ENCODE measurements at regions of chr11 and their contacts with region 1.

Region 1: GRCh38 chr11:60913793-60914632 is at the start of gene TMEM109:
- DNase-seq: peak; percentile 96
- H3K4me3 Mint-ChIP-seq: peak within 1 kb of the TSS; percentile 93
- H3K27ac Mint-ChIP-seq: peak within 1 kb of the TSS; percentile 98
- H3K4me1 Mint-ChIP-seq: peaks cover 42% of the 10 kb centered on the region
- H3K27me3 Mint-ChIP-seq: peaks cover 5% of the 10 kb centered on the region
- total RNA-seq, gene TMEM109: 144 and 147 TPM in 2 replicates

Region 2: GRCh38 chr11:60899046-60899936 is 14.7 kb before region 1 on chr11:
- intact Hi-C with region 1: no loop called
- DNase-seq: peak; percentile 81
- H3K4me3 Mint-ChIP-seq: no peak overlapping the region
- H3K27ac Mint-ChIP-seq: peak overlapping the region; percentile 50
- H3K4me1 Mint-ChIP-seq: peaks cover 12% of the 10 kb centered on the region
- H3K27me3 Mint-ChIP-seq: no peaks in the 10 kb centered on the region

Region 3: GRCh38 chr11:60951899-60952741 is 38.1 kb after region 1 on chr11 and contains the start of gene SLC15A3:
- intact Hi-C with region 1: loop called (anchors 1 kb)
- DNase-seq: peak; percentile 77
- H3K4me3 Mint-ChIP-seq: peak within 1 kb of the TSS; percentile 82
- H3K27ac Mint-ChIP-seq: peak within 1 kb of the TSS; percentile 74
- H3K4me1 Mint-ChIP-seq: peaks cover 16% of the 10 kb centered on the region
- H3K27me3 Mint-ChIP-seq: peaks cover 33% of the 10 kb centered on the region
- total RNA-seq, gene SLC15A3: 3.0 and 4.0 TPM in 2 replicates

Region 4: DNA sequence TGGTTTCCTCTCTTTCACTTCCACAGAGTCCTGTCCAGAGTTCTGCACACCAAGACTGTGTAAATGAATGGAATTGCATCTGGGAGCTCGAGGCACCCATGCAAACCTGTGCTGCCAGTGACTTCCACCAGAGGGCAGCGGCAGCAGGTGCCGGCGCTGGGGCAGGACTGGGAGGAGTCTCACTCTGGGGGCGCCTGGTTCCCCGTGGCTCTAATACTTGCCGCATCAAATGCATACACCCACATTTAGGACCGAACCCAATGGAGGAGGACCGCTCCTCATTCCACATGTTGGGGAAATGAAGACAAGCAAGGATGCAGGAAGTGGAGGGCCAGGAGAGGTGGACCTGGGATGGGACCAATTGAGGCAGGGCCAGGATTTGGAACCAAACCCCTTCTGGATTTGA is 56.4 kb after region 1 on chr11:
- intact Hi-C with region 1: loop called (anchors 1 kb)
- DNase-seq: peak; percentile 95
- H3K4me3 Mint-ChIP-seq: peak overlapping the region; percentile 93
- H3K27ac Mint-ChIP-seq: peak overlapping the region; percentile 64
- H3K4me1 Mint-ChIP-seq: peaks cover 25% of the 10 kb centered on the region
- H3K27me3 Mint-ChIP-seq: peaks cover 11% of the 10 kb centered on the region

Region 5: GRCh38 chr11:60978546-60979380 is 64.8 kb after region 1 on chr11:
- intact Hi-C with region 1: loop called (anchors 2 kb)
- DNase-seq: peak; percentile 84
- H3K4me3 Mint-ChIP-seq: peak overlapping the region; percentile 90
- H3K27ac Mint-ChIP-seq: peak overlapping the region; percentile 95
- H3K4me1 Mint-ChIP-seq: peaks cover 72% of the 10 kb centered on the region
- H3K27me3 Mint-ChIP-seq: no peaks in the 10 kb centered on the region

Region 6: DNA sequence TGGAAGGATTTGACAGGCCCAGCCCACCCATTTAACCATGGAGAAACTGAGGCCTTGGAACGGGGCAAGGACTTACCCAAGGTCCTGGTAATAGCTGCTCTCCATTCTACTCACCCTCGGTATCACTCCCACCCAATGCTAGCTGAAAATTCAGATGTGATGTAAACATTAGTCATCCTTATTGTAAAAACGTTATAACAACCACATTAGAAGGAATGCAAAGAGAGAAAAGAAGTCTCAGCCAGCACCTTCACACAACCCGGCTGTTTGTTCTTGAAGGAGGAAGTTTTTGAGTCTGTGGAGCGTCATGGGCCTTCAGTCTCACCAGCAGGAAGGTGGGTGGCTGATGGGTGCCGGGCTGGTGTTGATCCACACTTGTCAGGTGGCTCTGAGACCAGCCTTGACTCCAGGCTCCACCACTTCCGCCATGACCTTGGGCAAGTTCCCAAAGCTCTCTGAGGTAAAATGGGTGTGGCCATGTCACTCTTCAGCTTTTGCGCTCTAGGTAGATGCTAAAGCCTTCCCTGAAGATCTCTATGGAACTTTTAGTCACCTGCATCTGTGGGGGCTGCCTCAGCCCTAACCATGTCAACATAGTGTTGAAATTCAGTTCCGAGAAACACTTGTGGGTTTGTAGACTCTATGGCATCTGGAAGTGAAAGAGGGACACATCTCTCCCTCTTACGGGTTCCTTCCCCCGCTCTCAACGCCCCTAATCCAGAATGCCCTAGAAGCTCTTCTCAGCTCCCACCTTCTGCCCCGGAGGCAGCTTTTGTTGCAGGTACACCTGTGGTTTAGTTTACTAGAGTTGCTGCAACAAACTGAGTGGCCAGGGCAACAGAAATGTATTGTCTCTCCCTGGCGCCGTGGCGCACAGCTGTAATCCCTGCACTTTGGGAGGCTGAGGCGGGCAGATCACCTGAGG is 72.2 kb after region 1 on chr11:
- intact Hi-C with region 1: loop called (anchors 2 kb)
- DNase-seq: peak; percentile 95
- H3K4me3 Mint-ChIP-seq: peak overlapping the region; percentile 84
- H3K27ac Mint-ChIP-seq: peak overlapping the region; percentile 94
- H3K4me1 Mint-ChIP-seq: peaks cover 88% of the 10 kb centered on the region
- H3K27me3 Mint-ChIP-seq: no peaks in the 10 kb centered on the region

Region 7: GRCh38 chr11:61028272-61028761 is 114.3 kb after region 1 on chr11:
- intact Hi-C with region 1: loop called (anchors 10 kb)
- DNase-seq: peak; percentile 83
- H3K4me3 Mint-ChIP-seq: peak overlapping the region; percentile 88
- H3K27ac Mint-ChIP-seq: peak overlapping the region; percentile 97
- H3K4me1 Mint-ChIP-seq: peaks cover 77% of the 10 kb centered on the region
- H3K27me3 Mint-ChIP-seq: no peaks in the 10 kb centered on the region

Region 8: GRCh38 chr11:61111786-61112517 is 197.9 kb after region 1 on chr11:
- intact Hi-C with region 1: loop called (anchors 5 kb)
- DNase-seq: peak; percentile 92
- H3K4me3 Mint-ChIP-seq: no peak overlapping the region
- H3K27ac Mint-ChIP-seq: peak overlapping the region; percentile 90
- H3K4me1 Mint-ChIP-seq: peaks cover 91% of the 10 kb centered on the region
- H3K27me3 Mint-ChIP-seq: no peaks in the 10 kb centered on the region